Aorta (tissue), 5 donors: ENCODE measurements at regions of chrX and their contacts with region 1.

Region 1: GRCh38 chrX:48021026-48021900 is 14.5 kb downstream of the SPACA5 start:
- DNase-seq: peak; percentile 87 to 90
- ATAC-seq: peak; percentile 87
- H3K4me3 ChIP-seq: peak overlapping the region; percentile 37 to 68
- H3K27ac ChIP-seq: peak overlapping the region; percentile 9 to 87
- H3K4me1 ChIP-seq: no peaks in the 10 kb centered on the region
- H3K27me3 ChIP-seq: no peaks in the 10 kb centered on the region

Region 2: GRCh38 chrX:47193475-47194193 is 827.6 kb before region 1 on chrX and contains the start of gene UBA1:
- intact Hi-C with region 1: loop called (anchors 10 kb)
- DNase-seq: peak; percentile 98
- ATAC-seq: peak; percentile 96
- H3K4me3 ChIP-seq: peak within 1 kb of the TSS; percentile 35 to 76
- H3K27ac ChIP-seq: peak within 1 kb of the TSS; percentile 10 to 90
- H3K4me1 ChIP-seq: peaks cover 0 to 3% of the 10 kb centered on the region in 2 donors
- H3K27me3 ChIP-seq: no peaks in the 10 kb centered on the region
- total RNA-seq, gene UBA1: 160 to 167 TPM

Region 3: GRCh38 chrX:47650164-47651042 is 370.9 kb before region 1 on chrX and contains the start of gene ELK1:
- intact Hi-C with region 1: loop called in 1 of 2 experiments (anchors 10 kb)
- DNase-seq: peak; percentile 96
- ATAC-seq: peak; percentile 97
- H3K4me3 ChIP-seq: peak within 1 kb of the TSS; percentile 15 to 77
- H3K27ac ChIP-seq: peak within 1 kb of the TSS in 1 of 2 donors; percentile 53
- H3K4me1 ChIP-seq: no peaks in the 10 kb centered on the region
- H3K27me3 ChIP-seq: no peaks in the 10 kb centered on the region
- total RNA-seq, gene ELK1: 27.2 to 39.2 TPM

Region 4: DNA sequence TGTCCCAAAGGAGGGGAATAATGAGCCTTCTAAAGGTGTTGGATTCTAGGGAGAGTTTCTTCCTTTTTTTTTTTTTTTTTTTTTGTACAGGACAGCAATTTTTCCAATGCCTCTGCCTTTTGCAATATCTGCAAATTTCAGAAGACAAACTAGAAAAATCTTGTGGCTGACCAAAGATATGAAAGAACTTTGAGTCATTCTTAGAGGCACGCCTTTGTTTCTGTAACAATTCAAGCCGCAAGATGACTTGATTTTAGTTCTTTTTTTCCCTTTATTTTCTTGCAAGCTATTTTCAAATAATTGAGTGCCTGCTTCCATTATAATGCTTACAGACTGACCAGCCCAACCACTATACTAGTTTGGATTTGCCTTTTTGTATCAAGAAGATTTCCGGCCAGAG is 314.7 kb before region 1 on chrX:
- intact Hi-C with region 1: no loop called
- DNase-seq: no peak
- ATAC-seq: no peak
- H3K4me3 ChIP-seq: no peak overlapping the region
- H3K27ac ChIP-seq: no peak overlapping the region
- H3K4me1 ChIP-seq: no peaks in the 10 kb centered on the region
- H3K27me3 ChIP-seq: no peaks in the 10 kb centered on the region

Region 5: DNA sequence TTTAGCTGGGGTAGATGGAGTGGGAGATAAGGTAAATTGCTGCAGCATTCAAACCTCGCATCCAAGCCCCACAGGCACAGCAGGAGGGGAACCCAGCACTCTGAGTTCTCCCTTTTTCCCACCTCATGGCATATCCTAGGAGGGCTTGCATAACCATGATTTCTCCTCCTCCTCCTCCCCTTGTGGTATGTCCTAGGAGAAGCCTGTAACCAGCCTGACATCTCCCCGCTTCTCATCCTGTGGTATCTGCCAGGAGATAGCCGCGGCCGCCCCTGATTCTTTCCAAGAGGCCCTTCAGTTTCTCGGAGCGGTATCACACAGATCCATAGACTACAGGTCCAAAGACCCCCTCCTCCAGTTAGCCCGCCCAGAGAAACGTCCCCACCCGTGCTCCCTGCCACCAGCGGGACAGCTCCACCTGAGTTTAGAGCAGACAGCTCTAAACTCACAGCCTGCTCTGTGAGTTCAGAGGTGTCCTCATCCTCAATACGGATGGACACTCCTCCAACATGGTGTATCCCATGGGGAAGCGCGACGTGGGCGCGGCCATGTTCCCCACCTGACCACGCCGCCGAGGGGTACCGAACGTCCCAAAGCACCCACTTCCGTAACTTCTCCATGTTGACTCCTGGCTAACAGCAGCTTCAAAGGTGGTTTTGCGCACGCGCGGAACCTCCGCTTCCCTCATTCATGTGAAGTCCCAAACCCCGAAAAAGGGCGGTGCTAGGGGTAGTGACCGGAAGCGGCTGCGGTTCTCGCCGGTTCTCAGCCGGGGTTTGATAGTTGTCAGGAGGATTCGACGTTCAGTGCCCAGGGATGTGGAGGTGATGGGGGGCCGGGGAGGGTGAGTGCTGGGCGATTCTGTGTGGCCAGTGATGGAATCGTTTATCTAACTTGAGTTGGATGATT is 184.8 kb before region 1 on chrX and contains the start of gene ZNF81:
- intact Hi-C with region 1: loop called (anchors 5 to 10 kb)
- DNase-seq: peak; percentile 97 to 98
- ATAC-seq: peak; percentile 97
- H3K4me3 ChIP-seq: peak within 1 kb of the TSS; percentile 72 to 79
- H3K27ac ChIP-seq: no peak within 1 kb of the TSS
- H3K4me1 ChIP-seq: no peaks in the 10 kb centered on the region
- H3K27me3 ChIP-seq: no peaks in the 10 kb centered on the region
- total RNA-seq, gene ZNF81: 10.1 to 13.3 TPM

Region 6: GRCh38 chrX:47854474-47854873 is 166.8 kb before region 1 on chrX:
- intact Hi-C with region 1: loop called in 1 of 2 experiments (anchors 5 kb)
- DNase-seq: peak in 1 of 2 donors; percentile 48
- ATAC-seq: no peak
- H3K4me3 ChIP-seq: no peak overlapping the region
- H3K27ac ChIP-seq: no peak overlapping the region
- H3K4me1 ChIP-seq: no peaks in the 10 kb centered on the region
- H3K27me3 ChIP-seq: no peaks in the 10 kb centered on the region